Dorsolateral prefrontal cortex (tissue), 120 donors: ENCODE measurements at regions of chr3 and their contacts with region 1.

Region 1: GRCh38 chr3:157572559-157573270 is 69.5 kb upstream of the VEPH1 start:
- DNase-seq: no peak
- H3K4me3 ChIP-seq: no peak overlapping the region
- H3K27ac ChIP-seq: no peak overlapping the region
- H3K27me3 ChIP-seq: peaks cover 0 to 6% (median 0%) of the 10 kb centered on the region in 45 donors
- CTCF ChIP-seq: peak; percentile 52 to 81 (median 70)

Region 2: GRCh38 chr3:157532529-157533297 is 40.0 kb before region 1 on chr3:
- intact Hi-C with region 1: loop called (anchors 2 to 5 kb)
- DNase-seq: no peak
- H3K4me3 ChIP-seq: no peak overlapping the region
- H3K27ac ChIP-seq: no peak overlapping the region
- H3K27me3 ChIP-seq: no peaks in the 10 kb centered on the region
- CTCF ChIP-seq: peak; percentile 61 to 90 (median 77)